ENCODE measurements at regions of chr3 and their contacts with region 1.

Region 1: GRCh38 chr3:177359593-177360357 is 162.5 kb upstream of the TBL1XR1 start:
- DNase-seq: peak; percentile 95 to 97 (median 96)
- ATAC-seq: peak; percentile 91 to 94 (median 92)
- H3K4me3 ChIP-seq: peak overlapping the region in 11 of 12 donors; percentile 4 to 57 (median 41)
- H3K27ac ChIP-seq: peak overlapping the region; percentile 73 to 95 (median 91)
- H3K4me1 ChIP-seq: peaks cover 11 to 68% (median 60%) of the 10 kb centered on the region in 12 donors
- H3K27me3 ChIP-seq: no peaks in the 10 kb centered on the region
- CTCF ChIP-seq: peak in 1 of 12 donors; percentile 15
- POLR2A ChIP-seq: no peak

Region 2: DNA sequence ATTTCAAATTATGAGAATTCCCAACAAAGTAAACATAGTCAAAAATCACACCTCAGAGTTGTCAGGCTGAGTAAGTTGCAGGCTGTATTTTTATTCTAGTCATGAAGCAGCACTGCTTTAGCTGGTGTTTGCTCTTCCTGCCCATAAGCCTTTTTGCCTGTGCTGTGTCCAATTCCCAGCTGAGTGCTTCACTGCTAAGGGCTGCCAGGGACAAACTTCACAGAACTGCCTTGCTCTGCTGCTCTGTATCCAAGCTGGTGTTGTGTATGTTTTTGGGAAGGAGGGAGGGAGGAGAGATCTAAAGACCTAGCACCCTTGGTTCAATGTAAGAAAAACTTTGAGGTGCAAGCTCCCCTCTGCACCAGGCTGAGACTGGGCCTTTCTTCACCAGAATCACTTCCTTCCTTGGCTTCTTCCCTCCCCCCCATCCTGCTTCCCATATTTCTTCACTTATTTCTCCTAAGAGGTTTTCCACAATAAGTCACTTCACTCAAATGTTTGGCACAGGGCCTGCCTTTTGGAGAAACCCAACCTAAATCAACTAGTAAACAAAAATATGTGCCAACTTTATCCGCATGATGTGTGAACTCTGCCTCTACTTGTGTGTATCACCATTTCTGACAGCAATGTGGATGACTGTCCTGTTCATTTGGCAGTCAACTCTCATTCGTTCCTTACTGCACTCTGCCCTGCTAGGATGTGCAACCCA is 318.6 kb before region 1 on chr3:
- intact Hi-C with region 1: loop called in 1 of 10 experiments (anchors 10 kb)
- DNase-seq: peak in 3 of 5 donors; percentile 37 to 46 (median 38)
- ATAC-seq: peak; percentile 84 to 92 (median 90)
- H3K4me3 ChIP-seq: no peak overlapping the region
- H3K27ac ChIP-seq: peak overlapping the region in 11 of 12 donors; percentile 26 to 73 (median 54)
- H3K4me1 ChIP-seq: peaks cover 0 to 42% (median 29%) of the 10 kb centered on the region in 12 donors
- H3K27me3 ChIP-seq: no peaks in the 10 kb centered on the region
- CTCF ChIP-seq: no peak
- POLR2A ChIP-seq: no peak

Region 3: DNA sequence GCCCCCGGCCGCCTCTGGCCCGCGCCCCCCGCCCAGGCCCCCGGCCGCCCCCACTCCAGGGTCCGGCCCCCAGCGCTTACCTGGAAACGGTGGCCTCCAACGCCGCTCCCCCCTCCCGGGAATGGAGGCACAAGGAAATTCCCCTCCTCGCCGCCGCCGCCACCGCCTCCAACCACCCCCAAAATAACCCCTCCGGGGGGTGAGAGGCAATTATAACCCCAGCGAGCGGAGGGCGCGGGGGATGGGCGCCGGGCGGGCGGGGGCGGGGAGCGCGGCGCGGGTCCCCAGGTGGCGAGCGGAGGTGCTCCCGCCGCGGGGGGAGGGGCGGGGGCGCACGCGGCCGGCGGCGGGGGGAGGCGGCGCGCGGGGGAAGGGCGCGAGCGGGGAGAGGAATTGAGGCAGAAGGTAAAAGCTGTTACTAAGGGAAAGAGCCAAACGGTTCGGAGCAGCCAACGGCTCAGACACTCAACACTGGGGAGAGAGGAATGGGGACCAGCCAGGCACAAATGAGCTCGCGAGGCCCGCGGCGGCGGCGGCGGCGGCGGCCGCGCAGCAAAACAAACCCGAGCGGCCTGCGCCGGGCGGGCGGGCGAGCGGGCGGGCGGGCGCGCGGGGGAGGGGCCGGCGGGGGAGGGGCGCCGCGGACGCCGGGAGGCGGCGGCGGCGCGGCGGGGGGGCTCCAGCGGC is 162.6 kb before region 1 on chr3 and contains the start of gene TBL1XR1:
- intact Hi-C with region 1: loop called (anchors 1 to 5 kb)
- DNase-seq: peak; percentile 92 to 95 (median 95)
- ATAC-seq: peak; percentile 81 to 92 (median 89)
- H3K4me3 ChIP-seq: peak within 1 kb of the TSS; percentile 72 to 96 (median 90)
- H3K27ac ChIP-seq: peak within 1 kb of the TSS; percentile 96 to 99 (median 98)
- H3K4me1 ChIP-seq: peaks cover 0 to 58% (median 23%) of the 10 kb centered on the region in 12 donors
- H3K27me3 ChIP-seq: no peaks in the 10 kb centered on the region
- CTCF ChIP-seq: no peak
- POLR2A ChIP-seq: no peak
- total RNA-seq, gene TBL1XR1: 50.0 to 176 (median 120) TPM

Region 4: DNA sequence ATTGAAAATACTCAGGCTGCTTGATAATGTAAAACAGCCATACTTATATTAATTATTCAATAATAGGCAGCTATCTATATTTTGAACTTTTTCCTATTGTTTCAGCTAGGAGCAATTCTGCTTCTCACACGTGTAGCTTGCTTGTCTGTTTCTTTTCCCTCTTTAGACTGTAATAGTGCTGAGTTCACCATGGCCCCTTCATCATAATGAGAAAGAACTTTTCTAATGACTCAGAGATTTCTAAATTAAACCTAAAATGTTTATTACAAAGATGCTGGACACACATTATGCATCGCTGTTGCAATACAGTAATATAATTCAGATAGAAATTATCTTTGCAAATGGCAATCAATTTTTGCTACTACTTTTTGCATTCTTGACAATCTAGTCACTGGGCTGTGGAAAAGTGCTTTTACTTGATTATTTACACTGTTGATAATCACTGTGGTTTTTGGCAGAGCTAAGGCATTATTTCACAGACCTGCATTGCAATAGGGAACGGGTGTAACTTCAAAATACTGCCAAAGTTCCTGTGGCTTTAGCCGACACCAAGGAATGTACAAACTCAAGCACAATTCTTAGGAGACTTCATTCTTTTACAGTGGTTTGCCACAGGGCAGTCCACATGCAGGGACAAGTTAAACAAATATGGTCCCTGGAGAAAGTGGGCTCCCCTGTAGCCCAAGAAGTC is 118.5 kb after region 1 on chr3:
- intact Hi-C with region 1: loop called in 3 of 10 experiments (anchors 5 to 10 kb)
- DNase-seq: peak in 2 of 5 donors; percentile 16 to 40
- ATAC-seq: peak; percentile 78 to 91 (median 87)
- H3K4me3 ChIP-seq: no peak overlapping the region
- H3K27ac ChIP-seq: peak overlapping the region in 10 of 12 donors; percentile 1 to 78 (median 45)
- H3K4me1 ChIP-seq: peaks cover 0 to 28% (median 9%) of the 10 kb centered on the region in 12 donors
- H3K27me3 ChIP-seq: no peaks in the 10 kb centered on the region
- CTCF ChIP-seq: no peak
- POLR2A ChIP-seq: no peak

Region 5: DNA sequence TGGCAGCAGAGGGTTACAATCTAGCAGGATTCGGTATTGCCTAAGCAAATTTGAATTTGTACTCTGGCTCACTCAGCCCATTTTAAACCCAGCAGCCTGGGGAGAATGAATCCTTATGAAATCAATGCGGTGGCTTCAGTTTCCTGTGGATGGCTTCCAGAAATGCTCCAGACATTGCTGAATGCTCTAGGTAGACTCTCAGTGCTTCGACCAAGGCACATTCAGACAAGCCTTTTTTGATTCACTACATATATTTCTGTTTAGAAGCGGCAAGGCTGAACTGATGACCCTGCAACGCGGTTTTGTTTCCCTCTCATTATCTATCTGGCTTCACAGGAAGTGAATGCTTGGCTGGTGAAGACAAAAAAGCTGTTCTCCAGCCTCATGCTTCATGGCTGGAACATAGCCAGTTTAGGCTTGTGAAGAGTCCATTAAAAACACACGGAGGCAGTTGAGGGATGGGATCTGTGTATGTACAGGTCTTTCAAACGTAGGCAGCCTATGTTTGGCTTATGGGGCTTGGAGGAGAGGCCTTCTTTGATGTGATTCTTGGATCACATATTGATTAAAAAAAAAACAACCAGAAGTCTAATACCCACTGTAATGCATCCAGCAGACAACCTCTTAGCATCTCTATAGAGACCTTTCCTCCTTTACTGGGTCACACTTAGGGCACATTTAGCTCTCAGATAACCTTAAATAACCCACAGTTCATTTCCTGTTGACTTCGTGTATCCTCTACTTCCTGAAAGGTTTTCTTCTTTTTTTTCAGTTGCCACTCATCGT is 237.7 kb after region 1 on chr3:
- intact Hi-C with region 1: loop called in 2 of 10 experiments (anchors 10 kb)
- DNase-seq: peak in 4 of 5 donors; percentile 40 to 51 (median 45)
- ATAC-seq: peak; percentile 61 to 80 (median 72)
- H3K4me3 ChIP-seq: peak overlapping the region in 2 of 12 donors; percentile 1 to 20
- H3K27ac ChIP-seq: peak overlapping the region; percentile 31 to 78 (median 52)
- H3K4me1 ChIP-seq: peaks cover 3 to 87% (median 31%) of the 10 kb centered on the region in 12 donors
- H3K27me3 ChIP-seq: no peaks in the 10 kb centered on the region
- CTCF ChIP-seq: no peak
- POLR2A ChIP-seq: no peak

Region 6: DNA sequence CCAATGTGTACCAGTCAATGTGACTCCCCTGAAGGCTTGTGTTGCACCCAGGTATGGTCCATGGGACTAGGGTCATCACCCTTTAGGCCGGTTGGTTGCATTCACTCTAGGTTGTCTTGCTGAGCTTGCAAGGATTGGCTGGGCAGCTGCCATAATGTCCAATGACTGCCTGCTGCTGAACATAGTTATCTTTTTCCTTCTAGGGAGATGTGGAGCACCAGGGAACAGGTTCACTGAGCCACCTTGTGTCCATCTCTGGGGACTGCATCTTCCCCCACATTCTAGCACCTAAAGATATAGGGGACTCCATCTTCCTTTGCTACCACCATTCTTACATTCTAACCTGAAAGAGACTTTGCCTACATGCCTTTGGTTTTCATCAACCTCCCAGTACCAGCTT is 417.9 kb after region 1 on chr3:
- intact Hi-C with region 1: loop called in 3 of 10 experiments (anchors 5 to 10 kb)
- DNase-seq: peak in 4 of 5 donors; percentile 25 to 52 (median 36)
- ATAC-seq: peak in 2 of 4 donors; percentile 26 to 47
- H3K4me3 ChIP-seq: no peak overlapping the region
- H3K27ac ChIP-seq: no peak overlapping the region
- H3K4me1 ChIP-seq: peaks cover 0 to 67% (median 29%) of the 10 kb centered on the region in 12 donors
- H3K27me3 ChIP-seq: no peaks in the 10 kb centered on the region
- CTCF ChIP-seq: peak; percentile 37 to 65 (median 54)
- POLR2A ChIP-seq: no peak

Region 7: DNA sequence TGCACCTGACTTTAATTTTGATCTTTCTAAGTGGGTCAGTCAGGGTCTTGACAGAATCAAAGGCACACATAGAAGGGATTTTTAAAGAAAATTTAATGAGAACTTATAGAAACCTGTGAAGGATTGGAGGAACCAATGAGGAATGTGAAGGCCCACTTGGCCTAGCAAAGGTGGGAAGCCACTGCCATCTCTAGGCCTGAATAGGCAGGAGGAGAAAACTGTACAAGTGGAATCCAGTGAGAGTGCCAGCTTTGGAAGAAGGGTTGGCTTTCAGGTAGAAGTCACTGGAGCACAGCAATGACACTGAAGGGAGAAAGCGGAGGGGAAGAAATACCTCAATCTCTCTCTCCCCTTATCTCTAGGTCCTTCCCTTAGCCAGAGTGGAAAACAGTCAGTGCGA is 795.7 kb after region 1 on chr3:
- intact Hi-C with region 1: loop called in 1 of 10 experiments (anchors 10 kb)
- DNase-seq: no peak
- ATAC-seq: no peak
- H3K4me3 ChIP-seq: no peak overlapping the region
- H3K27ac ChIP-seq: no peak overlapping the region
- H3K4me1 ChIP-seq: peaks cover 0 to 9% (median 0%) of the 10 kb centered on the region in 12 donors
- H3K27me3 ChIP-seq: no peaks in the 10 kb centered on the region
- CTCF ChIP-seq: peak in 4 of 12 donors; percentile 6 to 14 (median 12)
- POLR2A ChIP-seq: no peak